H1 (cell line): ENCODE measurements at regions of chr19 and their contacts with region 1.

Region 1: DNA sequence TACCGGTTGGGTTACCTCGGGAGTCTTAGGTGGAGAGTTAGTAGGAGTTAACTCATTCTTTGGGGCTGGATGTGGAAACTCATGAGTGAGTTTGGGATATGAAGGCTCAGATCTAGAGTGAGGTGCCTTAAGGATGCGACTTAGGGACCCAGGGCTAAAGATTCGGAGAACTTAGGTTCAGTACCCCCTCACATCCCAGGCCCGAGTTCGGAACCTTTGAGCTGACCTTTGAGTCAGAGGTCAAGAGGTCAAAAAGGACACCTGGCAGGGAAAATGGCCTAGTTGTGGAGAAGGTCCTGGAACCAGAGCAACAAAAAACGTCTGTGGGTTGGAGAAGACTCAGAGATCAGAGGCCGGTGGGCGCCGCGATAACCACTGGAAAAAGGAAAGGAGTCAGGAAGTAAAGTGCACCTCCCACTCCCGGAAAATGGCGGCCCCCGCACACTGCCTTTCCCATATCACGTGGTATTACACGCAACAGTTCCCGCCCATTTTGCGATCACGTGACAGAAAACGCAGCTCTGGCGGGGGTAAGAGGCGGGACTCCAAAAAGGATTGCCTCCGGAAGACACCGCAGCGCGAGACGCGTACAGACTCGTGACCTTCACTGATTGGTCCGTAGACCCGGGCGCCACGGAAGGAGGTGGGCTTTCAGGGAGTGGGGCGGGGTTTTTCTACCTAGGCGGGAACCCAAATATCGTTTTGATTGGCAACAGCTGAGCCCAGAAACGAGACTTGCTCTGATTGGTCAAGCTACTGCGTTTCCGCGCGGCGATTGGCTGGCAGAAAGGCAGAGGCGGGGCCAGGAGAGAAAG is at the start of gene ACTMAP:
- DNase-seq: peak; percentile 98 to 99
- H3K4me3 ChIP-seq: peak within 1 kb of the TSS; percentile 80 to 99 (median 90)
- H3K27ac ChIP-seq: peak within 1 kb of the TSS; percentile 99
- H3K4me1 ChIP-seq: peaks cover 0 to 10% (median 2%) of the 10 kb centered on the region in 4 experiments; a peak in 4 of 7 replicates
- H3K27me3 ChIP-seq: no peaks in the 10 kb centered on the region
- CTCF ChIP-seq: no peak
- EP300 ChIP-seq: 0 out of 3 replicates have a peak, but pooled peaks of 1 of the 2 experiments have one; percentile 60
- POLR2A ChIP-seq: peak in 1 of 2 experiments; percentile 63; a peak in 1 of 3 replicates
- RAD21 ChIP-seq: no peak
- total RNA-seq, gene ACTMAP: 24.8 and 26.5 TPM in 2 replicates

Region 2: GRCh38 chr19:40613640-40614303 is 136.5 kb before region 1 on chr19:
- CTCF ChIA-PET with region 1: no interaction called
- POLR2A ChIA-PET with region 1: no interaction called
- DNase-seq: peak in 1 of 2 experiments; percentile 88
- H3K4me3 ChIP-seq: peak overlapping the region; percentile 71 to 94 (median 86)
- H3K27ac ChIP-seq: peak overlapping the region; percentile 43; the same call in 1 of the 2 replicates
- H3K4me1 ChIP-seq: peaks cover 3 to 13% (median 9%) of the 10 kb centered on the region in 4 experiments; a peak in 6 of 7 replicates
- H3K27me3 ChIP-seq: peaks cover 2 to 33% (median 31%) of the 10 kb centered on the region in 4 experiments
- CTCF ChIP-seq: no peak
- EP300 ChIP-seq: no peak
- POLR2A ChIP-seq: peak in 1 of 2 experiments; percentile 75; a peak in 2 of 3 replicates
- RAD21 ChIP-seq: no peak

Region 3: DNA sequence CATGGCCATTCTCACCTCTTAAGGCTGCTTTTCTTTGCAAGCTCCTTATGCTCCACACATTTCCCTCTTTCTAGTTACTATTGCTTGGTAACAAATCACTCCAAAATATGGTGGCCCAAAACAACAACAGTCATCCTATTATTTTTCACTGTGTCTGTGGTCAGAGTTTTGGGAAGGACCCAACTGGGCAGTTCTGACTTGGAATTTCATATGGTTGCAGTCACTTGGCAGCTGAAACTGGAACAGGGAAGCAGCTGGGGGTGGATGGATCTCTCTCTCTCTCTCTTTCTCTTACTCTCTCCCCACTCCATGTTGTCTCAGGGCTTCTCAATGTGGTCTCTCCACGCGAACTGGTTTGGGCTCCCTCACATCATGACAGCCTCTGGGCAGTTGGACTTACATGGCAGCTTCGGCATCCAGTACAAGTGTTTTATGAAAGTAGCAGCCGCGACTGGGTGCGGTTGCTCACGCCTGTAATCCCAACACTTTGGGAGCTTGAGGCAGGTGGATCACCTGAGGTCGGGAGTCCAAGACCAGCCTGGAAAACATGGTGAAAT is 99.4 kb before region 1 on chr19:
- CTCF ChIA-PET with region 1: no interaction called
- POLR2A ChIA-PET with region 1: no interaction called
- DNase-seq: no peak
- H3K4me3 ChIP-seq: no peak overlapping the region
- H3K27ac ChIP-seq: no peak overlapping the region
- H3K4me1 ChIP-seq: no peaks in the 10 kb centered on the region
- H3K27me3 ChIP-seq: no peaks in the 10 kb centered on the region
- CTCF ChIP-seq: no peak
- EP300 ChIP-seq: no peak
- POLR2A ChIP-seq: no peak
- RAD21 ChIP-seq: no peak

Region 4: GRCh38 chr19:40690693-40691420 is 59.4 kb before region 1 on chr19:
- CTCF ChIA-PET with region 1: no interaction called
- POLR2A ChIA-PET with region 1: interaction called, 13 read pairs
- DNase-seq: peak; percentile 70 to 91
- H3K4me3 ChIP-seq: peak overlapping the region; percentile 54 to 76 (median 70)
- H3K27ac ChIP-seq: peak overlapping the region; percentile 86
- H3K4me1 ChIP-seq: peaks cover 0 to 25% (median 15%) of the 10 kb centered on the region in 4 experiments; a peak in 6 of 7 replicates
- H3K27me3 ChIP-seq: no peaks in the 10 kb centered on the region
- CTCF ChIP-seq: no peak
- EP300 ChIP-seq: no peak
- POLR2A ChIP-seq: peak in 1 of 2 experiments; percentile 30; a peak in 2 of 3 replicates
- RAD21 ChIP-seq: no peak

Region 5: DNA sequence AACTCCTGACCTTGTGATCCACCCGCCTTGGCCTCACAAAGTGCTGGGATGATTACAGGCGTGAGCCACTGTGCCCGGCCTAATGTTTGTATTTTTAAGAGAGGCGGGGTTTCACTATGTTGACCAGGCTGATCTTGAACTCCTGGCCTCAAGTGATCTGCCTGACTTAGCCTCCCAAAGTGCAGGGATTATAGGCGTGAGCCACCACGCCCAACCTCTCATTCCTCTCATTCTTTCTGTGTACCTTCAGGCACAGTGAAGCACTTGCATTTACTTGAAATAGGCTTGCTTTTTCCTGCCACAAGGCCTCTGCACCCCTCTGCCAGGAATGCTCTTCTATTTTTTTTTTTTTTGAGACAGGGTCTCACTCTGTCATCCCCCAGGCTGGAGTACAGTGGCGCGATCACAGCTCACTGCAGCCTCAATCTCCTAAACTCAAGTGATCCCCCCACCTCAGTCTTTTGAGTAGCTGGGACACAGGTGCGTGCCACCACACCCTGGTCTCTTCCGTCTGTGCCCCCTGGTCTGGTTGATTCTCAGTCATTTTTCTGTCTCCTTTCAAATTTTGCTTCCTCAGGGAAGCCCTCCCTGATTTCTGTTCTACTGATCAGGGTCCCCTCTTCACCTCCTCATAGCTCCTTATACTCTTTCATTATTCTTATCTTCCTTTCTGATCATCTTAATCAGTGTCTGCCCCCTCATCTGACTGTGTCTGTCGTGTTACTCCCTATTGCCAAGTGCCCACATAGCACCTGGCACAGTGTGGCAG is 15.1 kb before region 1 on chr19:
- CTCF ChIA-PET with region 1: interaction called, 5 read pairs
- POLR2A ChIA-PET with region 1: interaction called, 120 read pairs
- DNase-seq: no peak
- H3K4me3 ChIP-seq: no peak overlapping the region
- H3K27ac ChIP-seq: no peak overlapping the region
- H3K4me1 ChIP-seq: no peaks in the 10 kb centered on the region; a peak in 1 of 7 replicates
- H3K27me3 ChIP-seq: no peaks in the 10 kb centered on the region
- CTCF ChIP-seq: no peak
- EP300 ChIP-seq: no peak
- POLR2A ChIP-seq: no peak
- RAD21 ChIP-seq: no peak

Region 6: DNA sequence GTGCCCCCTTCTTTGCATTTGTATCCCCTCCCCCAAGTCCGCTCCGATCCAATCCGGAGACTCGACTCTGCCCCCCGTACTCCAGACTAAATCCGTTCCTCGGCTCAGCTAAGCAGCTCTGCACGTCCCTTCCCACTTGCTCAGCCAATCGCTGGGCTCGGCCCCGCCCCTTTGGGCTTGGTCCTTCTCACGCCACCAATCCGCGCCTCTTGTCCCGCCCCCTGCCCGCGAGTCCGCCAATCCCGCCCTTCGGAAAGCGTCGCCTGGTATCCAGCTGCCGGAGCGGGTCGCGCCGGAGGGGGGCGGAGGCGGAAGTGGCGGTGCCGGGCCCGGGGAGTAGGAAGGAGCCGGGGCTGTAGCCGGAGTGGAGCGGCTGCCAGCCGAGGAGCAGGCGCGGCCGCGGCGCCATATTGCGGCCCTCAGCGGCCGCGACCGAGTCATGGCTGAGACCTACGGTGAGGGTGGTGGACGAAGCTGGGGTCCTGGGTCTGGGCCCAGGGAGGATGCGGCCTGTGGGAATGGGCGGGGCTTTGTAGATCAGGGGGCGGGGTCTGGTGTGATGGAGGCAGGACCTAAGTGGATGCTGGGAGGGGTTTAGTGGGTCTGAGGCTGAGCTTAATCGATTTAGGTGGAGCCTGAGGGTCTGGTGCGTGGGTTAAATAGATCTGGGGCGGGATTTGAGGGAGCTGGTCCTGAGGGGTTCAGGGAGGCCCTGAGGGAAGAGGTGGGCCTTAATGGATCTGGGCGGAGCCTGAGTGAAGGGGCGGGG is 27.9 kb after region 1 on chr19 and contains the start of gene RAB4B:
- CTCF ChIA-PET with region 1: interaction called, 3 read pairs
- POLR2A ChIA-PET with region 1: interaction called, 399 read pairs
- DNase-seq: peak; percentile 100
- H3K4me3 ChIP-seq: peak within 1 kb of the TSS; percentile 79 to 90 (median 86)
- H3K27ac ChIP-seq: peak within 1 kb of the TSS; percentile 99
- H3K4me1 ChIP-seq: peaks cover 0 to 14% (median 6%) of the 10 kb centered on the region in 4 experiments; a peak in 6 of 7 replicates
- H3K27me3 ChIP-seq: no peaks in the 10 kb centered on the region
- CTCF ChIP-seq: no peak
- EP300 ChIP-seq: no peak
- POLR2A ChIP-seq: no peak
- RAD21 ChIP-seq: no peak
- total RNA-seq, gene RAB4B: 15.8 and 15.9 TPM in 2 replicates

Region 7: GRCh38 chr19:40806488-40807468 is 56.5 kb after region 1 on chr19:
- CTCF ChIA-PET with region 1: interaction called, 26 read pairs
- POLR2A ChIA-PET with region 1: interaction called, 241 read pairs
- DNase-seq: peak; percentile 90 to 95
- H3K4me3 ChIP-seq: peak overlapping the region in 3 of 4 experiments; percentile 22 to 35 (median 23); a peak in 3 of 8 replicates
- H3K27ac ChIP-seq: no peak overlapping the region; the same call in 1 of the 2 replicates
- H3K4me1 ChIP-seq: peaks cover 3 to 55% (median 27%) of the 10 kb centered on the region in 4 experiments
- H3K27me3 ChIP-seq: no peaks in the 10 kb centered on the region; a peak in 1 of 7 replicates
- CTCF ChIP-seq: peak; percentile 84 to 98 (median 98)
- EP300 ChIP-seq: peak; percentile 63 to 98
- POLR2A ChIP-seq: no peak; a peak in 1 of 3 replicates
- RAD21 ChIP-seq: peak; percentile 52 to 61

Region 8: GRCh38 chr19:40897962-40898361 is 147.7 kb after region 1 on chr19:
- CTCF ChIA-PET with region 1: no interaction called
- POLR2A ChIA-PET with region 1: no interaction called
- DNase-seq: no peak
- H3K4me3 ChIP-seq: no peak overlapping the region
- H3K27ac ChIP-seq: no peak overlapping the region
- H3K4me1 ChIP-seq: no peaks in the 10 kb centered on the region
- H3K27me3 ChIP-seq: no peaks in the 10 kb centered on the region; a peak in 1 of 7 replicates
- CTCF ChIP-seq: no peak
- EP300 ChIP-seq: no peak
- POLR2A ChIP-seq: no peak
- RAD21 ChIP-seq: no peak